Activated B cell treated with CpG ODN at 0.5 μM for 24 hours (primary cell): ENCODE measurements at regions of chrX and their contacts with region 1.

Region 1: DNA sequence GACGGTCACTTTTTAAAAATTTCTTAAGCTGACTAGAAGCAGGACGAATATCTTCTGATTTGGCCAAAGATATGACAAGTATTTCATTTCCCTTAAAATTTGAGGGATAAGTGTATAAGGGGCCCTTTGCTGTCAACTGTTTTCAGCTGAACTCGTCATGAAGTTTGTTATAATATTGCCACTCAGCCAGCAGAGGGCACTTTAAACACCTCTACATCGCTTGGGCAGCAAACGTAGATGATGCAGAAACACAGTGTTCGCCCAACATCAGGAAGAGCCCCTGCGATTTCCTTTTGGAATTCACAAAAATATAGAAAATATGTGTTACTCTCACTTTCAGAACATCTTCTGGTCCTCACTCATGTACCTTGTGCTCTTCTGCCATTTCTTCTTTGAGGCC is 435.7 kb upstream of the FMR1 start:
- DNase-seq: no peak
- ATAC-seq: no peak
- H3K4me3 Mint-ChIP-seq: no peak overlapping the region
- H3K27ac Mint-ChIP-seq: no peak overlapping the region
- H3K4me1 Mint-ChIP-seq: no peaks in the 10 kb centered on the region
- H3K27me3 Mint-ChIP-seq: no peaks in the 10 kb centered on the region
- CTCF ChIP-seq: no peak

Region 2: GRCh38 chrX:147403075-147403474 is 72.9 kb before region 1 on chrX:
- CTCF ChIA-PET with region 1: no interaction called
- POLR2A ChIA-PET with region 1: no interaction called
- intact Hi-C with region 1: no loop called
- DNase-seq: no peak
- ATAC-seq: no peak
- H3K4me3 Mint-ChIP-seq: no peak overlapping the region
- H3K27ac Mint-ChIP-seq: no peak overlapping the region
- H3K4me1 Mint-ChIP-seq: no peaks in the 10 kb centered on the region
- H3K27me3 Mint-ChIP-seq: no peaks in the 10 kb centered on the region
- CTCF ChIP-seq: no peak

Region 3: GRCh38 chrX:147498796-147499195 is 22.8 kb after region 1 on chrX:
- CTCF ChIA-PET with region 1: no interaction called
- POLR2A ChIA-PET with region 1: no interaction called
- intact Hi-C with region 1: no loop called
- DNase-seq: no peak
- ATAC-seq: no peak
- H3K4me3 Mint-ChIP-seq: no peak overlapping the region
- H3K27ac Mint-ChIP-seq: no peak overlapping the region
- H3K4me1 Mint-ChIP-seq: no peaks in the 10 kb centered on the region
- H3K27me3 Mint-ChIP-seq: no peaks in the 10 kb centered on the region
- CTCF ChIP-seq: no peak

Region 4: DNA sequence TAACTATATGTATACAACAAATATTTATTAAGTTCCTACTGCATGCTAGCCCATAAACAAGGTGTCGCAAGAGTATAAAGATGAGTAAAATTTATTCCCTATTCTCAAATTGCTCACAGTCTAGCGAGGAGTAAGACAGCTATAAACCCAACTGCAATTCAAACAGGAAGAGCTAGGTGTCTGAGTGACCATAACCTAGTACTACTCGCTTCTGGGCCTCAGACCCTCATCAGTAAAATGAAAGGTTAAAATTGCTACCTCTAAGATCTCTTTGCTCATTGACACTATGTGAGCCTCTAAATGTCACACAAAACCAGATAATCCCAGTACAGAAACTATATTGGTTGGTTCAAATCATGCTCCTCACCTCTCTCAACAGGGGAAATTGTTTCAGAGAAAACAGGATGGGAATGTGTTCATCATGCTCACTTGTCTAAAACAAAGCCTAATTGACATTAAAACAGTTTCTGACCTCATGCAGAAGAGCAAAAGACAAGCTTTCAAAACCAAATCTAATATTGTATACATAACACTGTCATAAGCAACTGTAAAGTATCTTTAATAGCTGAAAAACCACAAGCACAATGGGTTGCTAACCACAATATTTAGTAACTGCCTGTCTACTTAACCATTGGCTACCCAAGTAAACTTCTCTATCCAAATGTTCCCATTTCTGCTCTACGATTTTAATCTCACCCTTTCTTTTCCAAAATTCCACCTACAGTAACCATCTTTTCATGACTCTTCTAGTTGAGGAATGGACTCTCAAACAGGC is 171.1 kb after region 1 on chrX:
- CTCF ChIA-PET with region 1: no interaction called
- POLR2A ChIA-PET with region 1: no interaction called
- intact Hi-C with region 1: no loop called
- DNase-seq: no peak
- ATAC-seq: no peak
- H3K4me3 Mint-ChIP-seq: no peak overlapping the region
- H3K27ac Mint-ChIP-seq: no peak overlapping the region
- H3K4me1 Mint-ChIP-seq: no peaks in the 10 kb centered on the region
- H3K27me3 Mint-ChIP-seq: no peaks in the 10 kb centered on the region
- CTCF ChIP-seq: no peak

Region 5: DNA sequence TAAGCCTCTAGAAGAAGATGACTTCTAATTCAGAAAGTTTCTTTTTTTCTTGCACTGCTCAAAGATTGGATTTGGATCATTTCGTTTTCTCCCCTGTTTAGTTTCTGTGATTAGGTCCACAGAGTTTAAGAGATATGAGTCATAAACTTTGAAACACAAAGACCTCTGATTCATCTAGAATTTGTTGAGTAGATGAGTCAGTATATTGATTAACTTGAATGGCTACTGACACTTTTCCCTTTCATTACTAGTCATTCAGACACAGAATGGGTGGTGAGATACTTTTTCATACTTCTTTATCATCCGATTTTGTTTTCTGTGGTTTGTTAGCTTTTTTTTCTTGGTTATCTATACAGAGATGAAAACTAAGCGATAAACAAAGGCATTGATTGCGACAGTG is 990.3 kb after region 1 on chrX:
- CTCF ChIA-PET with region 1: no interaction called
- POLR2A ChIA-PET with region 1: no interaction called
- intact Hi-C with region 1: no loop called
- DNase-seq: no peak
- ATAC-seq: peak; percentile 28
- H3K4me3 Mint-ChIP-seq: no peak overlapping the region
- H3K27ac Mint-ChIP-seq: no peak overlapping the region
- H3K4me1 Mint-ChIP-seq: peaks cover 2% of the 10 kb centered on the region
- H3K27me3 Mint-ChIP-seq: no peaks in the 10 kb centered on the region
- CTCF ChIP-seq: no peak

Region 6: DNA sequence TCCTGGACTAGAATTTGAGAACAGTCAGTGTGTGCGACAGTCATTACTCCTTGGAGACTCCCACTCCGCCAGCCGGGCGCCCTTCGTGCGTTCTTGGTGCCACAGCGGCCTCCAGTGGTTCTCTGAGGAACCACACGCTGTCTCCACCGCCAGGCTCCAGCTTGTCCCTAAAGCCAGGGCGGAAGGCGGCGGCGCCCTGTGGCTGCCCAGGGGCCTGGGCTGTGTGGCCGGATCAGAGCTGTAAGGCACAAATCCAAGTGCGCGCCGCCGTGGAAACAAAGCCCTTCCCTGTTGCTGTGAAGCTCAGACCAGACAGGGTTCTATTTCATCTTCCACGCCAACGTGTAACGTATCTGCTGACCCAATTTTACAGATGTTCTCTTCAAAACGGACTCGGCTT is 1994.9 kb after region 1 on chrX:
- CTCF ChIA-PET with region 1: no interaction called
- POLR2A ChIA-PET with region 1: no interaction called
- intact Hi-C with region 1: loop called (anchors 5 kb)
- DNase-seq: peak; percentile 34
- ATAC-seq: peak; percentile 70
- H3K4me3 Mint-ChIP-seq: no peak overlapping the region
- H3K27ac Mint-ChIP-seq: no peak overlapping the region
- H3K4me1 Mint-ChIP-seq: peaks cover 3% of the 10 kb centered on the region
- H3K27me3 Mint-ChIP-seq: peaks cover 3% of the 10 kb centered on the region
- CTCF ChIP-seq: no peak